ENCODE measurements at regions of chr5 and their contacts with region 1.

Region 1: DNA sequence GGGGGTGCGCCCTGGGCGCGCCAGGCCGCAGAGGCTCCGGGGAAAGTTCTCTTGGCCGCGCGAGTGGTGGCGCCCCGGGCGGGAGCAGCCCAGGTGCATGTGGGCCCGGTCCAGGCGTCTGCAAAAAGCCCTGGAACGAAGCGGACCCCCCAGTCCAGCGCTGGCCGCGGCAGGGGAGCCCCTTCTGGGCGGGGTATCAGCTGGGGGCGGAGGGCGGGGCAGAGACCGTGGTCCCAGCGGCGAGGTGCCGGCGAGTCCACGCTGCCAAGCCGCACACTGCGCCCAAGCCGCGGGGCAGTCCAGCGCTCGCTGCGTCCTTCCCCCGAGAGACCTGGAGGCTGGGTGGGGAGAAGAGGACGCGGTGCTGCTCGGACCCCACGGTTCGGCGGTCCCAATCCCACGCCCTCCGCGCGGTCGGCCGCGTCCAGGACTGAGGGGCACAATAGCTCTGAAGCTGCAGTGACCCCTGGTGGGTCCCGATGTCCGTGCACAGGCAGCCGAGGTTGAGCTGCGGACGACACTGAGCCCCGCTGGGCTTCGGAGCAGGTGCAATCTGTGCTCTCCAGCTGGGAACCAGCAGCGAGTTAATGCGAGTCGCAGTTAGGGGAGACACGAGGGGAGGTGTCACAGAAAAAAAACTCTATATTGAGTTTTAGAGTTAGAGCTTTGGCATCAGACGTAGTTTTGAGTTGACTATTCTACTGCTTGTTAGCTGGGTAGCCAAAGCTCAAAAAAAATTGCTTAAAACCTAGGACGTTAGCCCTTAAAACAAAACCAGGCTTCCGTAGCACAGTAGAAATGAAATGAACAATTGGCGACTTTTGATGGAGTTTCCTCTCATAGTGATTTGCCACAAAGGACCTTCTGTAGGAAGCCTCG is 1.1 kb upstream of the EPB41L4A start:
- DNase-seq: peak; percentile 76
- ATAC-seq: peak; percentile 84
- H3K4me3 ChIP-seq: peak overlapping the region in 4 of 5 experiments; percentile 67 to 79 (median 71)
- H3K4me3 Mint-ChIP-seq: peak overlapping the region; percentile 92
- H3K27ac ChIP-seq: no peak overlapping the region
- H3K27ac Mint-ChIP-seq: no peak overlapping the region
- H3K4me1 ChIP-seq: peaks cover 16 to 20% of the 10 kb centered on the region in 2 donors
- H3K4me1 Mint-ChIP-seq: peaks cover 9% of the 10 kb centered on the region
- H3K27me3 ChIP-seq: peaks cover 0 to 21% (median 16%) of the 10 kb centered on the region in 4 experiments
- H3K27me3 Mint-ChIP-seq: peaks cover 25% of the 10 kb centered on the region
- CTCF ChIP-seq: peak; percentile 70

Region 2: DNA sequence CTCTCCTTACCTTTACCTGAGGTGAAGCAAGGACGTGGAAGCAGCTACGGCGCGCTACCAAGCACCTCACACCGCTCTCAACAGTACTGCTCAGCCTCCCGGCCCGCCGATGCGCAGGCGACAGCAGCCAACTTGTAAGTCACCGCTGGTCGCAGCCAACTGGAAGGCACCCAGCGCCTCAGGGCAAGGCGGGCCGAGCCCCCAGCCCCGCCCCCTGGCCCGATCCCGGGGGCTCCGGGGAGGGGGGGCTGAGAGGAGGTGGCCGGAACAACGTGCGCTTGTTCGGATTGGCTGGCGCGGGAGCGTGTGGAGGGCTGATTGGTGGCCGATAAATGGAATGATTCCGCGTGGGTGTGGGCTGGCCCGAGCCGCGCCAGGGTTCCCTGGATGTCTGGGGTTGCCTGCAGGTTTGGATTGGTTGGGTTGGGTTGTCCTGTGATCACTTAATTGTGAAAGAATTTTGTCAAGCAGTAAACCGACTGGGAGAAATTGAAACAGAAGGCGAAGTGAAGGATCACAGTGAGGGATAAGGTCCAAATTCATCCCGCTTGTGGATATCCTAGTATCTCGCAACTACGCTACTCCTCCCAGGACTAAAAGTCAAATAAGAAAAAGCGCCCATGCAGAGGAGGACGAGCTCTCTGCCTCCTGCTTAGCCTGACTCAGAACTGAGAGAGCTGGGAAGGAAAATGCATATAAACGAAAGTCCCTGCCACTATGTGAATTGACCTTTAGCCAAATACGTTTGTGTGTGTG is 907.7 kb before region 1 on chr5 and contains the start of gene STARD4:
- CTCF ChIA-PET with region 1: no interaction called
- POLR2A ChIA-PET with region 1: no interaction called
- intact Hi-C with region 1: loop called (anchors 5 kb)
- DNase-seq: peak; percentile 96
- ATAC-seq: peak; percentile 96
- H3K4me3 ChIP-seq: peak within 1 kb of the TSS; percentile 90 to 96 (median 93)
- H3K4me3 Mint-ChIP-seq: peak within 1 kb of the TSS; percentile 99
- H3K27ac ChIP-seq: peak within 1 kb of the TSS; percentile 81 to 82
- H3K27ac Mint-ChIP-seq: peak within 1 kb of the TSS; percentile 98
- H3K4me1 ChIP-seq: peaks cover 10 to 12% of the 10 kb centered on the region in 2 donors
- H3K4me1 Mint-ChIP-seq: peaks cover 36% of the 10 kb centered on the region
- H3K27me3 ChIP-seq: no peaks in the 10 kb centered on the region
- H3K27me3 Mint-ChIP-seq: no peaks in the 10 kb centered on the region
- CTCF ChIP-seq: no peak
- total RNA-seq, gene STARD4: 28.5 and 31.1 TPM in 2 replicates

Region 3: GRCh38 chr5:112174959-112175594 is 245.1 kb before region 1 on chr5:
- CTCF ChIA-PET with region 1: interaction called, 69 read pairs
- POLR2A ChIA-PET with region 1: interaction called, 3 read pairs
- intact Hi-C with region 1: loop called (anchors 1 kb)
- DNase-seq: peak; percentile 70
- ATAC-seq: peak; percentile 64
- H3K4me3 ChIP-seq: no peak overlapping the region
- H3K4me3 Mint-ChIP-seq: no peak overlapping the region
- H3K27ac ChIP-seq: no peak overlapping the region
- H3K27ac Mint-ChIP-seq: no peak overlapping the region
- H3K4me1 ChIP-seq: peaks cover 3% of the 10 kb centered on the region in 2 donors
- H3K4me1 Mint-ChIP-seq: peaks cover 4% of the 10 kb centered on the region
- H3K27me3 ChIP-seq: no peaks in the 10 kb centered on the region
- H3K27me3 Mint-ChIP-seq: no peaks in the 10 kb centered on the region
- CTCF ChIP-seq: peak; percentile 86

Region 4: DNA sequence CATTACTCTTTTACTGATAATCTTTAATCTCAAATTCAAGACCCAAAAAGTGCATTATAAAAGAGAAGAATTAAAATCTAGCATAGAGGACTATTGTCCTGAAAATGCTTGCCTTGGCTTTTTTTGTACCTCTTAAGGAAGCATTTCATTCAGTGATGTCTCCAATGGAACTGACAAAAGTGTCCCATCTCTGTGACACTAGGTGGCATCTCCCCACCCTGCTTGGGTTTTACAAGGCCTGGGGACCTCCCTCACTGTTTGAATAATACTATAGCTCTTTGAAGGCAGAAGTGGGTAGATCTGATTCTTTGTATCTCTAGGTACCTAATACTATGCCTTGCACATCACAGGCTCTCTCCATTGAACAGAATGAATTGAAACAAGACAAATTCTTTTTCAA is 181.8 kb before region 1 on chr5:
- CTCF ChIA-PET with region 1: interaction called, 13 read pairs
- POLR2A ChIA-PET with region 1: no interaction called
- intact Hi-C with region 1: no loop called
- DNase-seq: peak; percentile 9
- ATAC-seq: no peak
- H3K4me3 ChIP-seq: no peak overlapping the region
- H3K4me3 Mint-ChIP-seq: no peak overlapping the region
- H3K27ac ChIP-seq: no peak overlapping the region
- H3K27ac Mint-ChIP-seq: no peak overlapping the region
- H3K4me1 ChIP-seq: no peaks in the 10 kb centered on the region
- H3K4me1 Mint-ChIP-seq: no peaks in the 10 kb centered on the region
- H3K27me3 ChIP-seq: no peaks in the 10 kb centered on the region
- H3K27me3 Mint-ChIP-seq: peaks cover 3% of the 10 kb centered on the region
- CTCF ChIP-seq: no peak

Region 5: DNA sequence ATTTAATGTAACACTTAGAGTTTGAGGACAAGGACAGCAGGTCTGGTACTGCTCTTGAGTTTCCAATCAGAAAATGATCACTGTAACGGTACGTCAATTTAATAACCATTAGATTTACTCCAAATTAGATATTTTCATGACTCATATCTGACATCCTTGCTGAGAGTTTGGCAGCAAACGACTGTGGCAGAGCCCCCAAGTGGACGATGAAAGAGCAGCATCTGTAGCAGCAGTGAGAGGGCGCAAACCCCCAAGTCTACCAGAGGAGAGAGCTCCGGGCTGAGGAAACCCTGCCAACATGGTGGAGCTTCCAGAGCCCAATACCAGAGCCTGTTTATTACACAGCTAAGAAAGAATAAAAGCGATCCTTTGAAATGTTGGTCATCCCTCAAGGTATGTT is 72.1 kb after region 1 on chr5:
- CTCF ChIA-PET with region 1: interaction called, 14 read pairs
- POLR2A ChIA-PET with region 1: no interaction called
- intact Hi-C with region 1: no loop called
- DNase-seq: peak; percentile 64
- ATAC-seq: peak; percentile 91
- H3K4me3 ChIP-seq: no peak overlapping the region
- H3K4me3 Mint-ChIP-seq: no peak overlapping the region
- H3K27ac ChIP-seq: no peak overlapping the region
- H3K27ac Mint-ChIP-seq: no peak overlapping the region
- H3K4me1 ChIP-seq: peaks cover 4% of the 10 kb centered on the region in 2 donors
- H3K4me1 Mint-ChIP-seq: peaks cover 7% of the 10 kb centered on the region
- H3K27me3 ChIP-seq: no peaks in the 10 kb centered on the region
- H3K27me3 Mint-ChIP-seq: peaks cover 10% of the 10 kb centered on the region
- CTCF ChIP-seq: peak; percentile 63

Region 6: GRCh38 chr5:112551419-112552032 is 131.3 kb after region 1 on chr5:
- CTCF ChIA-PET with region 1: interaction called, 19 read pairs
- POLR2A ChIA-PET with region 1: no interaction called
- intact Hi-C with region 1: no loop called
- DNase-seq: peak; percentile 71
- ATAC-seq: peak; percentile 72
- H3K4me3 ChIP-seq: no peak overlapping the region
- H3K4me3 Mint-ChIP-seq: no peak overlapping the region
- H3K27ac ChIP-seq: no peak overlapping the region
- H3K27ac Mint-ChIP-seq: no peak overlapping the region
- H3K4me1 ChIP-seq: peaks cover 15 to 18% of the 10 kb centered on the region in 2 donors
- H3K4me1 Mint-ChIP-seq: peaks cover 26% of the 10 kb centered on the region
- H3K27me3 ChIP-seq: no peaks in the 10 kb centered on the region
- H3K27me3 Mint-ChIP-seq: no peaks in the 10 kb centered on the region
- CTCF ChIP-seq: peak; percentile 87

Region 7: DNA sequence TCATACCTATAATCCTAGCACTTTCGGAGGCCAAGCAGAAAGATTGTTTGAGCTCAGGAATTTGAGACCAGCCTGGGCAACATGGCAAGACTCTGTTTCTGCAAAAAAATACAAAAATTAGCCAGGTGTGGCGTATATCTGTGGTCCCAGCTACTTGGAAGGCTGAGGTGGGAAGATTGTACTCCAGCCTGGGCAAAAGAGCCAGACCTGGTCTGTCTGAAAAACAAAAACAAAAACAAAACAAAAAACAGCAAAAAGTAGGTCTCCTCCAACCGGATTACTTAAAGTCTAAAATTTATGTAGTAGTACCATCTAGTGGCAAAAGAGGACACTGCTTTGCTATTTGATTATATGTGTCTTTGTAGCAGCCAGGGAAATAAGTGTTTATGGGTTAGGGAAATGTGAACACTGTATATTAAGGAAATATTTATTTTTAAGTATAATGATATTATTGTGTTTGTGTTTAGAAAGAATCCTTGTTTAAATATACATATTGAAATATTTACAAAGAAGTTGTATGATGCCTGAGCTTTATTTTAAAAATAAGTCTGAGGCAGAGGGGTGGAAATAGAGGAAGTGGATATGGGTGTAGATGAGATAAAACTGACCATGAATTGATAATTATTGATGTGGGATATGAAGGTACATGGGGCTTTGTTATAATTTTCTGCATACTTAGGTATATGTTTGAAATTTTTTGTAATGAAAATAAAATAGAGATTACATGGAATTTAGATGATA is 337.4 kb after region 1 on chr5:
- CTCF ChIA-PET with region 1: interaction called, 20 read pairs
- POLR2A ChIA-PET with region 1: no interaction called
- intact Hi-C with region 1: loop called (anchors 2 kb)
- DNase-seq: peak; percentile 76
- ATAC-seq: peak; percentile 77
- H3K4me3 ChIP-seq: no peak overlapping the region
- H3K4me3 Mint-ChIP-seq: no peak overlapping the region
- H3K27ac ChIP-seq: peak overlapping the region in 1 of 2 donors; percentile 11
- H3K27ac Mint-ChIP-seq: peak overlapping the region; percentile 33
- H3K4me1 ChIP-seq: no peaks in the 10 kb centered on the region
- H3K4me1 Mint-ChIP-seq: peaks cover 8% of the 10 kb centered on the region
- H3K27me3 ChIP-seq: no peaks in the 10 kb centered on the region
- H3K27me3 Mint-ChIP-seq: no peaks in the 10 kb centered on the region
- CTCF ChIP-seq: peak; percentile 90

Measured in B cell (primary cell).